ENCODE measurements at regions of chr12 and their contacts with region 1.

Region 1: DNA sequence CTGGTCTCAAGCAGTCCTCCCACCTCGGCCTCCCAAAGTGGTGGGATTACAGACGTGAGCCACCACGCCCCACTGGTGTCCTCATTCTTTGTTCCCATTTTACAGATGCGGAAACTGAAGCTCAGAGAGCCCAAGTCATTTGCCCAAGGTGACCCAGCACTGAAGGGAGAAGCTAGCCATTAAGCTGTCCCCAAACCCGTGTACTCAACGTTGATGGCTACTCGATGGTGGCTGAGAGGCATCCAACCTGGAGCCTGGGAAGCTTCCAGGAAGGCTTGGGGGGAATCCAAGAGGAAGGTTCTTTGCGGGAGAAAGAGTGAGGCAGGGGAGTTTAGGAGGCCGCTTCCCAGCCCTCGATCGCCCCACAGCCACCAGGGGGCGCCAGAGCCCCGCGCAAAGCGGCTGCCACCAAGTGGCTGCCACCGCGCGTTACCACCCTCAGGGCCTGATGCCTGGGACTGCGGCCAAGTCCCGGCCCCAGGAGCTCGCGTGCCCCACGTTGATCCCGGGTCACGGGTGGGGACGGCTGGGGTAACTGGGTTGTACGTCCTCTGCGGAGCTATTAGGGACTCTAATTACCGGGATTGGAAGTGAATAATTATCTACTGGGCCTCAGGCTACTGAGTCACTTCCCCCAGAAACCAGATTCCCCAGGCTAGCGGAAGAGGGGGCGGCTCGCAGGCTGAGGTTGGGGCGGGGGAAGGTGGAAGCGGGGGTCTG is 8.8 kb upstream of the SH2B3 start:
- DNase-seq: peak; percentile 88
- H3K4me3 ChIP-seq: peak overlapping the region; percentile 41
- H3K27ac ChIP-seq: peak overlapping the region; percentile 34
- H3K4me1 ChIP-seq: peaks cover 12% of the 10 kb centered on the region
- H3K27me3 ChIP-seq: no peaks in the 10 kb centered on the region
- CTCF ChIP-seq: peak; percentile 99

Region 2: GRCh38 chr12:111451649-111452129 is 54.8 kb after region 1 on chr12:
- intact Hi-C with region 1: loop called (anchors 5 kb)
- DNase-seq: no peak
- H3K4me3 ChIP-seq: no peak overlapping the region
- H3K27ac ChIP-seq: peak overlapping the region; percentile 97
- H3K4me1 ChIP-seq: peaks cover 79% of the 10 kb centered on the region
- H3K27me3 ChIP-seq: no peaks in the 10 kb centered on the region
- CTCF ChIP-seq: peak; percentile 85

Region 3: DNA sequence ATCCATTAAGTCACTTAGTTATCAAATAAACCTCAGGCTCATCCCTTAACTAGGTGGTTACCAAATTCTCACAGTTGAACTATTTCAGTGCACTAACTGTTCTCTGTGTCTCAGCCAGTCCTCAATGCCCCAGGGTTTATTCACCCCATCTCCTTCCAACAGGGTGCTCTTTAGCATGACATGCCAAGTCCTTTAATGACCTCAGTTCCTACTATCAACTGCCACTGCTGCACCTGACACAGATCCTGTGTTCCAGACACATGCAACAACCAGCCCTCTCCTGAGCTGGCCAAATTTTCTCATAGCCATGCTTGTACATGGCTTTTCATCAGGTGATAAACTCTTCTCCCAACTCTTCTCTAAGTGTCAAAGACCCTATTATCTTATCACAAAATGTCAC is 122.2 kb after region 1 on chr12:
- intact Hi-C with region 1: no loop called
- DNase-seq: no peak
- H3K4me3 ChIP-seq: no peak overlapping the region
- H3K27ac ChIP-seq: peak overlapping the region; percentile 35
- H3K4me1 ChIP-seq: peaks cover 16% of the 10 kb centered on the region
- H3K27me3 ChIP-seq: no peaks in the 10 kb centered on the region
- CTCF ChIP-seq: no peak

Region 4: GRCh38 chr12:111529424-111530368 is 132.8 kb after region 1 on chr12:
- intact Hi-C with region 1: loop called (anchors 5 kb)
- DNase-seq: no peak
- H3K4me3 ChIP-seq: no peak overlapping the region
- H3K27ac ChIP-seq: no peak overlapping the region
- H3K4me1 ChIP-seq: no peaks in the 10 kb centered on the region
- H3K27me3 ChIP-seq: no peaks in the 10 kb centered on the region
- CTCF ChIP-seq: peak; percentile 75